ENCODE measurements at regions of chr18 and their contacts with region 1.

Region 1: DNA sequence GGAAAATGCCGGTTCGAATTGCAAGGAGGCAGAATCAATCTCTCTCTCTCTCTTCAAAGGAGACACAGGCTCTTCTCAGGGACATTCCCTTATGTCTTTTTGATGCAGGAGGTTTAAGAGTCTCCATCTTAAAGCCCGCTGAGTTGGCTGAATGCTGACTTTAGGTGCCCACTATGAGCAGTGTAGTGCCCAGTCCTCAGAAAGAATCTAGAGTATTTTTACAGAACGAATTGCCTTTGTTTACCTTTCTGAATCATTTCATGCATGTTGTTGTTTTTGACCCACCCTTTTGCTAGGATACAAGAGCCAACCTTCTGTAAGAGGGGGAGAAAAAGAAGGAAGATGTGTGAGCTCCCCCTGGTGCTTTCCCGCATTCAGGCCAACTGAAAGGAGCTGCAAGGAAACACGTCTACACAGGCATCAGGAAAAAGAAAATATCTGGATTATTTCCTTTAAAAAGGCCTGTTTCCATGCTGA is 193.5 kb upstream of the TCF4 start:
- DNase-seq: peak; percentile 30 to 36
- ATAC-seq: peak; percentile 58 to 66
- H3K4me3 ChIP-seq: no peak overlapping the region
- H3K27ac ChIP-seq: peak overlapping the region; percentile 74 to 80 (median 79)
- H3K4me1 ChIP-seq: peaks cover 9 to 17% of the 10 kb centered on the region in 2 donors
- H3K27me3 ChIP-seq: no peaks in the 10 kb centered on the region
- CTCF ChIP-seq: peak; percentile 47 to 76 (median 59)
- POLR2A ChIP-seq: no peak

Region 2: DNA sequence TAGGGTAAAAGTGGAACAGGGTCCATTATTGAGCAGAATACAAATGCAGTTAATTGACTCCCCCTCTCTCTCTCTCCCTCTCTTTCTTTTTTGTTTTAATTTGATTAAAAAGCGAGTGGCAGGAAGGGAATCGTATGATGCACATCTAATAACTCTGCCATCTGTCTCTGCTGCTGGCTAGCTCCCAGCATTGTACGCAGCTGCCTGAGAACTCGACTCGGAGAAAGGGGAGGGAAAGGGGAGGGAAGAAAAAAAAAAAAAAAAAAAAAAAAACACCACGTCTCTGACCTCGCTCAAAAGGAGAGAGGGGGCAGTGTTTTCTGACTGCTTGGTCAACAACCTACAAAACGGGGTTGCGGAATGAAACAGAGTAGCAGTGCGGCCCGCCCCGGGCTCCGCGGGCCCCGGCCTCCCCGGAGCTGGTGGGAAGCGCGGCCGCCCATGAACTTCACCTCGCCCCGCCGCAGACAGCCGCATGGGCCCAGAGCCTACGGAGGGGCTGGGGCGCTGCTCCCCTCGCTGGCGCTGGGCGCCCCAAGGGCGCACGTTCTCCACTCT is 459.3 kb before region 1 on chr18:
- in situ Hi-C with region 1: no loop called
- intact Hi-C with region 1: loop called (anchors 5 kb)
- DNase-seq: peak; percentile 77 to 90
- ATAC-seq: peak; percentile 88 to 90
- H3K4me3 ChIP-seq: peak overlapping the region; percentile 57 to 82 (median 73)
- H3K27ac ChIP-seq: peak overlapping the region; percentile 93 to 95 (median 94)
- H3K4me1 ChIP-seq: peaks cover 53 to 54% of the 10 kb centered on the region in 2 donors
- H3K27me3 ChIP-seq: no peaks in the 10 kb centered on the region
- CTCF ChIP-seq: peak in 2 of 5 experiments; percentile 12 to 17
- POLR2A ChIP-seq: peak; percentile 68 to 84

Region 3: GRCh38 chr18:55343396-55344073 is 438.0 kb before region 1 on chr18:
- in situ Hi-C with region 1: loop called in 1 of 4 experiments (anchors 10 kb)
- intact Hi-C with region 1: loop called (anchors 2 kb)
- DNase-seq: no peak
- ATAC-seq: peak; percentile 55 to 68
- H3K4me3 ChIP-seq: no peak overlapping the region
- H3K27ac ChIP-seq: peak overlapping the region in 3 of 4 donors; percentile 15 to 28 (median 26)
- H3K4me1 ChIP-seq: peaks cover 16 to 28% of the 10 kb centered on the region in 2 donors
- H3K27me3 ChIP-seq: no peaks in the 10 kb centered on the region
- CTCF ChIP-seq: peak in 4 of 5 experiments; percentile 54 to 65 (median 60)
- POLR2A ChIP-seq: no peak

Region 4: GRCh38 chr18:55415258-55415871 is 366.2 kb before region 1 on chr18:
- in situ Hi-C with region 1: loop called (anchors 5 to 25 kb)
- intact Hi-C with region 1: loop called (anchors 1 kb)
- DNase-seq: peak; percentile 73 to 80
- ATAC-seq: peak; percentile 77 to 81
- H3K4me3 ChIP-seq: no peak overlapping the region
- H3K27ac ChIP-seq: peak overlapping the region; percentile 11 to 92 (median 89)
- H3K4me1 ChIP-seq: peaks cover 60 to 69% of the 10 kb centered on the region in 2 donors
- H3K27me3 ChIP-seq: no peaks in the 10 kb centered on the region
- CTCF ChIP-seq: peak; percentile 77 to 95 (median 87)
- POLR2A ChIP-seq: no peak

Region 5: DNA sequence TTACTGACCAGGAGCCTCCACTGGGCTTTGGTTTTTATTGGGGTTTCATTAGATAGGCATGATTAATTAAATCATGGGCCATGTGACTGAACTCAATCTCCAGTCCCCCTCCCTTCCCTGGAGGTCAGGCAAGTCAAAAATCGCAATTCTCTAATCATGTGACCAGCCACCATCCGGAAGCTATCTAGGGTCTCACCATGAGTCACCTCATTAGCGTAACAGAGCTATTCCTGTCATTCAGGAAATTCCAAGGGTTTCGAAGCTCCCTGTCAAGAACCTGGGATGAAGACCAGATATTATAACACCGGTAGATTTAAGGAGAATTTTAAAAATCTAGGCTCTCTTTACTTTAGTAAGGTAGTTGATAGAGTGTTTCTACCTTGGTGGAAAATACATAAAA is 13.3 kb before region 1 on chr18:
- in situ Hi-C with region 1: no loop called
- intact Hi-C with region 1: no loop called
- DNase-seq: no peak
- ATAC-seq: no peak
- H3K4me3 ChIP-seq: no peak overlapping the region
- H3K27ac ChIP-seq: peak overlapping the region in 1 of 4 donors; percentile 9
- H3K4me1 ChIP-seq: no peaks in the 10 kb centered on the region
- H3K27me3 ChIP-seq: no peaks in the 10 kb centered on the region
- CTCF ChIP-seq: no peak
- POLR2A ChIP-seq: no peak

Region 6: DNA sequence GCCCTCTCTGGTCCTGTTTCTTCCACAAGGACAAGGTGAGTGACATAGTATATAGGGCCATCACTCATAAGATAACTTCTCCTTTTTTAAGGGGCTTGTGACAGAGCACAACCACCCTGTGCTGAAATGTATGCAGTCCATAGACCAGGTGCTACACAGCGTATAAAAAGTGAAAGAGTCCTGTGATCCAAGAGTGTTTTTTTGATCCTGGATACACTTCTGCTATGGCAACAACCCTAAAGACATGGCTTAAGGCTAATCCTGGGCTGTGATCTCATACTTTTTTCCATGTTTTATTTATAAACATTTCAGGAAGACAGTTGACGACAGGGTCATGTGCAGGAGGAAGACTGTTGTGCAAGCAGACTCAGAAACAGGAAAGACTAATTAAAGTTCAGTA is 207.0 kb after region 1 on chr18:
- in situ Hi-C with region 1: no loop called
- intact Hi-C with region 1: loop called (anchors 10 kb)
- DNase-seq: peak in 1 of 2 donors; percentile 16
- ATAC-seq: peak; percentile 86 to 89
- H3K4me3 ChIP-seq: no peak overlapping the region
- H3K27ac ChIP-seq: peak overlapping the region; percentile 54 to 69 (median 61)
- H3K4me1 ChIP-seq: peaks cover 3 to 7% of the 10 kb centered on the region in 2 donors
- H3K27me3 ChIP-seq: no peaks in the 10 kb centered on the region
- CTCF ChIP-seq: no peak
- POLR2A ChIP-seq: no peak

Region 7: DNA sequence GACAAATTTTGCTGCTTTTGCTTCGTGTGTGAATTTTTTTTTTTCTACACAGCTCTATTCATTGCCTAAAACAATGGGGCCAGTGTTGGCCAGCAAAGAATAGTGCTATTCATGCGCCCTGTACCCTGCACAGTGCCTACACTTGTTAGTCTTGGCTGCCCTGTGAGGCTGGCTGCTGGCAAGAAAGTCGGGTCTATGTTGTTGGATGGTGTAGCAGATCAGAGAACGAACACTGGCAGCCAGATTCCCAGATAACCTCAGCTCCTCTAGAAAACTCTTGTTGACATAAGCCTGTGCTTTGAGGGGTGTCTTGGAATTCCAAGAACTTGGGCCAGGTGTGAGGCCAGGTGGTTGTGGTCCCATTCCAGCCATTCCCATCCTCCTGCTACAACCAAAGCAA is 262.2 kb after region 1 on chr18:
- in situ Hi-C with region 1: no loop called
- intact Hi-C with region 1: no loop called
- DNase-seq: no peak
- ATAC-seq: no peak
- H3K4me3 ChIP-seq: no peak overlapping the region
- H3K27ac ChIP-seq: no peak overlapping the region
- H3K4me1 ChIP-seq: no peaks in the 10 kb centered on the region
- H3K27me3 ChIP-seq: no peaks in the 10 kb centered on the region
- CTCF ChIP-seq: no peak
- POLR2A ChIP-seq: no peak